Heart right ventricle (tissue), 16 donors: ENCODE measurements at regions of chr5 and their contacts with region 1.

Region 1: DNA sequence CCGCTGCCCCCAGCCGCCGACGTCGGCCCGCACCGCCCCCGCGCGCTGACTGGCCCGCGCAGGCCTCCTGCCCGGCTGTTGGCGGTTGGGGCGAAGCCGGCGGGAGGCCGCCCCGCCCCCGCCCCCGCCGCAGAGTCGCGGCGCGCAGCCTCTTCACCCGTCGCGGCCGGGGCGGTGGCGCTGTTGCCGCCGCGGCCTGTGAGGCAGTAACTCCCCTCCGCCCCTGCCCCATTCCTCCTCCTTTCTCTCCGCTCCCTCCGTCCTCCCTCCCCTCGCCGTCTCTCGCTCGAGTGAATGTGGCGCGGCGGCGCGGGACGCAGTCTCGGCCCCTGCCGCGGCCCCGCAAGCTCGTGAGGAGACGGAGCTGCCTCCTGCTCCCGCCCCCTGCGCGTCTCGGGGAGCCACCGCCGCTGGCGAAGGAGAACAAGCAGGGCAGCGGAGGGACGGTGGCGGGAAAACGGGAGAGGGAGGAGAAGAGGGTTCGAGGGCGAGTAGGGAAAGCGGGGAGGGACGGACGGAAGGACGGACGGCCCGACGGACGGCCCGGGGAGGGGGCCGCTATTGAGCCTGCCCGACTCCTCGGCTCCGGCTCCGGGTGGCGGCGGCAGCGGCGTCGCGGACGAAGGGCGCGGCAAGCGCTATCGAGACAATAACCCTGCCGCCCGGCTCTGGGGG is 637 bp upstream of the ERBIN start:
- DNase-seq: peak; percentile 82 to 87
- ATAC-seq: peak; percentile 81 to 94 (median 89)
- H3K4me3 ChIP-seq: peak overlapping the region; percentile 69 to 95 (median 90)
- H3K27ac ChIP-seq: peak overlapping the region; percentile 92 to 100 (median 100)
- H3K4me1 ChIP-seq: peaks cover 0 to 46% (median 33%) of the 10 kb centered on the region in 9 donors
- H3K27me3 ChIP-seq: no peaks in the 10 kb centered on the region
- CTCF ChIP-seq: peak in 8 of 9 donors; percentile 27 to 67 (median 38)

Region 2: DNA sequence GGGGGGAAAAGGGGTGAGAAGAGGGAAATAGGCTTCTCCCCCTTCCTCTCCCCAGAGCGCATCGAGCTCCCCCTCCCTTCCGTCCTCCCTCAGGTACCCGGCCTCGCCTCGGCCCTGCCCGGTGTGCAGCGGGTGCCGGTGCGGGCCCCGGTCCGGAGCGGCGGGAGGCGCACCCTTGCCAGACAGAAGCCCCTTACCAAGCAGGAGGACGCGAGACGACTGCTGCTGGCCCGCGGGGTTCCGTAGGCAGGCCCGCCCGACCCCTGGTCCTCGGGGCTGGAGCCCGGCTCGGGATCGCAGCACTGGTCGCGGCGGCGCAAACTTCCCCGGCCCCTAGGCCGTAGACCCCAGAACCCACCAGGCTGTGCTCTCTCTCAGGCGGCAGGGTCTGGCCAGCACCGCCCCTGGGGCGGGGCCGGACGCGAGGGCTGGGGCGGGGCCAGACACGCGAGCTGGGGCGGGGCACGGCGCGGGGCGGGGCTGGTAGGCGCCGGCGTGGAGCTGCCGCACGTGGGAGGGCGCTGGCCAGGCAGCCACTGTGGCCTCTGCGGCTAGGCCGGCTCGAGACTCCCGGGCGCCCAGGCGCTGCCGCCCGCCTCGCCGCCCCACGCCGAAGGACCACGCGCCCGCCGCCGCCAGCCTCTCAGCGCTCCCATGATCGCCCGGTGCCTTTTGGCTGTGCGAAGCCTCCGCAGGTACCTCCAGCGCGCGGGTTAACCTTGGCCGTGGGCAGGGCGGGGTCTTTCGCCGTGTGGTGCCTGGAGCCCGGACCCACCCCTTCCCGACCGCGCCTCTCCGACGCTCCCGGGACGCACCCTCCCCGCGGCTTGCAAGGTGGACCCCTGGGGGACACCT is 203.8 kb before region 1 on chr5 and contains the starts of genes NLN and SGTB:
- intact Hi-C with region 1: loop called in 1 of 10 experiments (anchors 10 kb)
- DNase-seq: peak; percentile 83 to 91
- ATAC-seq: peak; percentile 96 to 99 (median 97)
- H3K4me3 ChIP-seq: peak within 1 kb of the TSS; percentile 70 to 100 (median 97)
- H3K27ac ChIP-seq: peak within 1 kb of the TSS in 9 of 10 donors; percentile 63 to 90 (median 79)
- H3K4me1 ChIP-seq: peaks cover 4 to 49% (median 16%) of the 10 kb centered on the region in 9 donors
- H3K27me3 ChIP-seq: no peaks in the 10 kb centered on the region
- CTCF ChIP-seq: no peak
- total RNA-seq, gene NLN: 10.9 to 17.4 (median 14.4) TPM
- total RNA-seq, gene SGTB: 5.1 to 9.7 (median 6.5) TPM

Region 3: GRCh38 chr5:66010476-66010875 is 84.7 kb after region 1 on chr5:
- intact Hi-C with region 1: loop called in 2 of 10 experiments (anchors 5 to 10 kb)
- DNase-seq: no peak
- ATAC-seq: no peak
- H3K4me3 ChIP-seq: no peak overlapping the region
- H3K27ac ChIP-seq: no peak overlapping the region
- H3K4me1 ChIP-seq: peaks cover 0 to 12% (median 0%) of the 10 kb centered on the region in 9 donors
- H3K27me3 ChIP-seq: no peaks in the 10 kb centered on the region
- CTCF ChIP-seq: no peak

Region 4: DNA sequence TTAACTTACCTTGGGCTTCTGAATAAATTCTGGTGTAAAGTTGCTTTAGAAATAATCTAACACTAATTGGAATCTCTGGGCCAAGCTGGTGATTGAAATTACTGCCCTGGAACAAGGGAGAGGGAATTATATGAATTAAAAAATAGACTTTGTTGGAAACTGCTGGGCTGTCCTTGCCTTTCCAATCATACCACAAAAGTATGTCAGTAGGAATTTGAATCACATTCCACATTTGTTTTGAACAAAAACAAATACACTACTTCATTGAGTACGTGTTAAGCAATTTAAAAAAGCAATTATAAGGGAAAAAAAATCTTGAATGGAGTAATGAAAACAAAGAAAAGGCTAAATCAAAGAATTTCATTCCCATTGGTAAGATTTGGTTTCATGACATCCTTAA is 115.9 kb after region 1 on chr5:
- intact Hi-C with region 1: loop called in 1 of 10 experiments (anchors 10 kb)
- DNase-seq: no peak
- ATAC-seq: no peak
- H3K4me3 ChIP-seq: no peak overlapping the region
- H3K27ac ChIP-seq: no peak overlapping the region
- H3K4me1 ChIP-seq: no peaks in the 10 kb centered on the region
- H3K27me3 ChIP-seq: no peaks in the 10 kb centered on the region
- CTCF ChIP-seq: no peak

Region 5: DNA sequence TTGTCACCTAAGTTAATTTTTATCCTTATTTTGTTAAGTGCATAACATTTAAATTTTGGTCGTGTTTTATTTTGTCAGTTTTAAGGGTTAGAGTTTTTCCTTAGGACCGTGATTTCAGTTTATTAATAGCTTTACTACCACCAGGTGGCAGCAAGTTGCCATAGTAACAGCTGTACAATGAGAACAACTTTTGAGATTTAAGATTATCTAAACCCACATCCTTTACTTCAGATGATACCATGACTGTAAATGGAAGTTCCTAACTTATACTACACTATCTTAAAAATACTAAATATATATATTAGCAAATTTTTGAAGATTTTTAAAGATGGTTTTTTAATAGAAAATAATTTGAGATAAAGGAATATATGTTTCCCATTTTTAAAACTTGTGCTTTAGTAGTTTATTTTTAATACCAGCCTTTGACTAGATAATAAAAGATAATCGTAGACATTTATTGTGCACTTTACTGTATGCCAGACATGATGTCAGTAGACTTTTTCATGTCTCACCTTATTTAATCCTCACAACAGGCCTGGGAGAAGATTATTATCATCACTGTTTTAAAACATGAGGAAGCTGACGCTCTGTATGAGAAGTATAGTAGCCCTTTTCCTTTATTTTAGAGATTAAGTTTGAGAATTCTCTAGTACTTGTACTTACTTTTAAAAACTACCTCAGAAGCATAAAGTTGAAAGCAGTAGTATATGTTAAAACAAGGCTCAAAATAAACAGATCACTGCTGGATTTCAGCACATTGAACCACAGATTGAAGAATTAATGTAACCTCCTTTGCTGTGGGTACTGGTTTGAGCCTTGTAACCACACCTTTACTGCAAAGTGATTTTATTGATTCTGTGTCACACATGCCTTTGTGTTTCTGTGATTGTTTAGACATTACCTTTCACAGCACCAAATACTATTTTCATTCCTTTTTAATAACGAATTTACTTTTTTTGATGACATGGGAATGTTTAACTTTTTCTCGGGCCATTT is 245.9 kb after region 1 on chr5:
- intact Hi-C with region 1: loop called in 1 of 10 experiments (anchors 10 kb)
- DNase-seq: peak in 1 of 2 donors; percentile 22
- ATAC-seq: peak in 1 of 8 donors; percentile 53
- H3K4me3 ChIP-seq: no peak overlapping the region
- H3K27ac ChIP-seq: no peak overlapping the region
- H3K4me1 ChIP-seq: peaks cover 0 to 13% (median 0%) of the 10 kb centered on the region in 9 donors
- H3K27me3 ChIP-seq: no peaks in the 10 kb centered on the region
- CTCF ChIP-seq: peak; percentile 15 to 69 (median 60)